Activated CD8-positive, alpha-beta T cell treated with anti-CD3 and anti-CD28 coated beads for 36 hours (primary cell): ENCODE measurements at regions of chr17 and their contacts with region 1.

Region 1: GRCh38 chr17:82126556-82127314 is 28.7 kb upstream of the FASN start:
- DNase-seq: peak; percentile 87
- ATAC-seq: peak; percentile 89
- H3K4me3 Mint-ChIP-seq: peak overlapping the region; percentile 66
- H3K27ac Mint-ChIP-seq: peak overlapping the region; percentile 91
- H3K4me1 Mint-ChIP-seq: peaks cover 55% of the 10 kb centered on the region
- H3K27me3 Mint-ChIP-seq: no peaks in the 10 kb centered on the region
- CTCF ChIP-seq: peak; percentile 33

Region 2: DNA sequence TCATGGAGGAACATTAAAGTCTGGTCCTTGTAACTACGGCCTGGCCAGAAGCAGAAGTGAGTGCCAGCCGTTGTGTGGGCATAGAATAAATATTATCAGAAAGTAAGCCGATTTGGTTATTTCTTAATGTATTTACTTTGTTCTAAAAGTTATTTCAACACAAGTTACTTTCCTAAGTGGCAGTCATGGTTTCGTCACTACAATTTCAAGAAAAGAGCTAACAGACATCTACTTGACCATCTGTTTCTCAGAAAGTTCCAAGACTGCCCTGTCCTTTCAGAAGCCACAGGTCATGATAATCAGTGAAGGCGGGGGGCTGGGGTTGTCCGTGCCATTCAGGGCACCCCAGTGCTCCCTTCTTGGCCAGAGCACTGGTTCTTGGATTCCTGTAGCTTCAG is 13.8 kb before region 1 on chr17:
- CTCF ChIA-PET with region 1: interaction called, 8 read pairs
- POLR2A ChIA-PET with region 1: interaction called, 20 read pairs
- intact Hi-C with region 1: no loop called
- DNase-seq: no peak
- ATAC-seq: no peak
- H3K4me3 Mint-ChIP-seq: no peak overlapping the region
- H3K27ac Mint-ChIP-seq: no peak overlapping the region
- H3K4me1 Mint-ChIP-seq: peaks cover 15% of the 10 kb centered on the region
- H3K27me3 Mint-ChIP-seq: no peaks in the 10 kb centered on the region
- CTCF ChIP-seq: no peak

Region 3: GRCh38 chr17:82267575-82268379 is 141.0 kb after region 1 on chr17:
- CTCF ChIA-PET with region 1: no interaction called
- POLR2A ChIA-PET with region 1: no interaction called
- intact Hi-C with region 1: no loop called
- DNase-seq: peak; percentile 65
- ATAC-seq: peak; percentile 73
- H3K4me3 Mint-ChIP-seq: peak overlapping the region; percentile 11
- H3K27ac Mint-ChIP-seq: peak overlapping the region; percentile 81
- H3K4me1 Mint-ChIP-seq: peaks cover 65% of the 10 kb centered on the region
- H3K27me3 Mint-ChIP-seq: no peaks in the 10 kb centered on the region
- CTCF ChIP-seq: no peak